ENCODE measurements at regions of chr3 and their contacts with region 1.

Region 1: DNA sequence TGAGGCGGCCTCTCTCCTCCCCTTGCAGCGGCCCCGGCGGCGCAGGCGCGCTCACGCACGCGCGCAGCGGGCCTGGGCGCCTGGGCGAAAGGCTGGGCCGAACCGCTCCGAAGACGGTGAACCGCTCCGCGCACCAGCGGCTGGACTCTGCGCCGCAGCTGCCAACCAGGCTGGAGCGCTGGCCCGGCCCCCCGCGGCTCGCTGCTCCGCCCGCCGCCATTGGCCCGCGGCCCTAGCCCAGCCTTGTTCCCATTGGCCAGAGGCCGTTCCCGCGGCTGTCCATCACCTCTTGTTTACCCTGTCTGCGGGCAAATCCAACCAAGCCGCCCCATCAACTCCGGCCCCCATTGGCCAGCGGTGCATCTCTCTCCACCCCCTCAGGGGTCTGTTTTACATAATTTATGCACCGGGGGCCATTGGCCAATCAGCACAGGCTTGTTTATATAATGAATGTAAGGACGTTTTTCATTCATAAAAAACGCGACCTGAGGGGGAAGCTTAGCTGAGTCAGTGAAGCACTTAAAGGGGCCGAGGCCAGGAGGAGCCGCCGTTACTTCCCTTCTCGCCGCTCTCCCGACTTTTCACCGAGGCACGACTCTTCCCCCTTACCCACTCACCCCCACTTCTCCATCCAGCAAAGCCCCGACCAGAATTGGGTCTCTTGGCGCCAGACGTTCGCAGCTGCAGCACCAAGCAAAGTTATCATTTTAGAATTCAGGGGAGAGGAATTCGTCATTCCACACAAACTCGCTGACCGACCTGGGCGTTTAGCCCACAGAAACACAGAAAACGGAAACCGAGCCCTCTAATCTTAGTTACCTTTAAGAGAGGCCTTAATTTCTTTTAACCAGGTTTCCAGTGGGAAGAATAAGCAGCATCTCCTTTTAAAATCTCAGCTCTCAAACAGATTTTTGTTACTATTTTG is at the start of gene ETV5:
- DNase-seq: peak; percentile 96
- ATAC-seq: peak; percentile 96
- H3K4me3 Mint-ChIP-seq: peak within 1 kb of the TSS; percentile 73
- H3K27ac Mint-ChIP-seq: peak within 1 kb of the TSS; percentile 42
- H3K4me1 Mint-ChIP-seq: peaks cover 34% of the 10 kb centered on the region
- H3K27me3 Mint-ChIP-seq: peaks cover 69% of the 10 kb centered on the region
- total RNA-seq, gene ETV5: 0.83 to 1.4 TPM

Region 2: GRCh38 chr3:185585859-185586685 is 523.1 kb before region 1 on chr3 and contains the start of gene SENP2:
- CTCF ChIA-PET with region 1: no interaction called
- POLR2A ChIA-PET with region 1: no interaction called
- intact Hi-C with region 1: loop called in 1 of 2 experiments (anchors 2 kb)
- DNase-seq: peak; percentile 100
- ATAC-seq: peak; percentile 98
- H3K4me3 Mint-ChIP-seq: peak within 1 kb of the TSS; percentile 87
- H3K27ac Mint-ChIP-seq: peak within 1 kb of the TSS; percentile 93
- H3K4me1 Mint-ChIP-seq: peaks cover 26% of the 10 kb centered on the region
- H3K27me3 Mint-ChIP-seq: no peaks in the 10 kb centered on the region
- total RNA-seq, gene SENP2: 23.2 to 24.6 TPM

Region 3: GRCh38 chr3:185878920-185879319 is 230.3 kb before region 1 on chr3:
- CTCF ChIA-PET with region 1: no interaction called
- POLR2A ChIA-PET with region 1: no interaction called
- intact Hi-C with region 1: no loop called
- DNase-seq: no peak
- ATAC-seq: no peak
- H3K4me3 Mint-ChIP-seq: no peak overlapping the region
- H3K27ac Mint-ChIP-seq: no peak overlapping the region
- H3K4me1 Mint-ChIP-seq: no peaks in the 10 kb centered on the region
- H3K27me3 Mint-ChIP-seq: peaks cover 4% of the 10 kb centered on the region

Region 4: DNA sequence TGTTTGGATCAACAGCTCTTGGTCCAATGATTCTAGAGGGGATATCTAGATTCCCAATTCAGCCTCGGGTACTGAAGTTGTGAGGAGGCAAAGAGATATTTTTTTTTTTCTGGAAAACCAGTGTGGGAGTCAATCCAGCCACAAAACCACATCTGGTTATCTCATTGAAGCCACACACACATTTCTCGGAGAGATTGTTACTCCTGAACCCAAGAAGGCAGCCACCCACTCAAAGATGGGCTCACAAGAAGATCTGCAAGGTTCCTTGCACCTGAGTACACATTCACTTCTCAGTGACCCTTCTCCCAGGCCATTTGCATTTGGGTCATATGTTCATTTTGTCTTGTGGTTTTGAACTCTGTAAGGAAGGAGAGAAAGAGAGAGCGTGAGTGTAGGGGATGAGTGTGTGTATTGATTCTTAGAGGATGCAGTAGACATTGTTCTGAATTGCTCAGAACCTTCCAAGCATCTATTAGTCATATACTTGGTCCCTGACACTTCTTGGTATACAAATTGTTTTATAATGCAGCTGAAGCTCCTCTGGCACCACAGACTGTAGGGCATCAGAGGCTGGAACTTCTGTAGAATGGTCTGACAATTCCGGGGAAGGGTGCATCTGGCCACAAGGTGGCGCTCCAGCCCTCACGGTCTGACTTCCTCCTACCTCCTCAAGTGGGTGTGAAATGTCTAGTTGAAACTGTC is 132.1 kb before region 1 on chr3:
- CTCF ChIA-PET with region 1: no interaction called
- POLR2A ChIA-PET with region 1: no interaction called
- intact Hi-C with region 1: loop called (anchors 5 kb)
- DNase-seq: peak; percentile 93
- ATAC-seq: peak; percentile 91
- H3K4me3 Mint-ChIP-seq: no peak overlapping the region
- H3K27ac Mint-ChIP-seq: peak overlapping the region; percentile 11
- H3K4me1 Mint-ChIP-seq: peaks cover 18% of the 10 kb centered on the region
- H3K27me3 Mint-ChIP-seq: no peaks in the 10 kb centered on the region

Region 5: GRCh38 chr3:186152889-186153292 is 43.7 kb after region 1 on chr3:
- CTCF ChIA-PET with region 1: no interaction called
- POLR2A ChIA-PET with region 1: no interaction called
- intact Hi-C with region 1: loop called (anchors 1 to 2 kb)
- DNase-seq: no peak
- ATAC-seq: peak; percentile 18
- H3K4me3 Mint-ChIP-seq: no peak overlapping the region
- H3K27ac Mint-ChIP-seq: no peak overlapping the region
- H3K4me1 Mint-ChIP-seq: peaks cover 13% of the 10 kb centered on the region
- H3K27me3 Mint-ChIP-seq: peaks cover 36% of the 10 kb centered on the region

Region 6: DNA sequence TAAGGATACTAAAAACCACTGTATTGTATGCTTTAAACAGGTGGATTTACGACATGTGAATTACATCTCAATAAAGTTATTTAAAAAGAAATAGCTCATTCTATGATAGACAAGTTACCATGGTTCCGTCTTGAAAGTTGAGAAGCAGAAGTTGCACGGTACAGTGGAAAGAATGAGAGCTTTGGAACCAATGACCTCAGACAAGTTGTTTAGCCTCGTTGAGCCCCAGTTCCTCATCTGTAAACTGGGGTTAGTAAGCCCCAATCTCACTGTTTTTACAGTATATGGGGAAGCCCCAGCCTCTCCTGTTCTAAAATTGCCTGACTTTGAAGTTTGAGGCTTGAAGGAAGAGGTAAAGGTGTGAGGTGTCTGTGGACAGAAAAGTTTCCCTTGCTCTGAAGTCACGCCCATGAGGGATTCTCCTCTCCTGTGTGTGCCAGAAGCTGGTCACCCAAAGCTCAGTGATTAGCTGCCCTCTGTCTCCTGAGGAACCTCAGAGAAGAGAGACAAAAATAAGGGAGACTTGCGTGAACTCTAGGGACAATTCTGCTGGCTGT is 425.0 kb after region 1 on chr3:
- CTCF ChIA-PET with region 1: interaction called, 4 read pairs
- POLR2A ChIA-PET with region 1: no interaction called
- intact Hi-C with region 1: loop called (anchors 2 to 10 kb)
- DNase-seq: peak; percentile 71
- ATAC-seq: peak; percentile 79
- H3K4me3 Mint-ChIP-seq: peak overlapping the region; percentile 55
- H3K27ac Mint-ChIP-seq: peak overlapping the region; percentile 99
- H3K4me1 Mint-ChIP-seq: peaks cover 94% of the 10 kb centered on the region
- H3K27me3 Mint-ChIP-seq: no peaks in the 10 kb centered on the region

Region 7: GRCh38 chr3:186806089-186807055 is 697.2 kb after region 1 on chr3 and contains the start of gene RFC4:
- CTCF ChIA-PET with region 1: no interaction called
- POLR2A ChIA-PET with region 1: no interaction called
- intact Hi-C with region 1: loop called in 1 of 2 experiments (anchors 5 kb)
- DNase-seq: peak; percentile 93
- ATAC-seq: peak; percentile 89
- H3K4me3 Mint-ChIP-seq: peak within 1 kb of the TSS; percentile 90
- H3K27ac Mint-ChIP-seq: peak within 1 kb of the TSS; percentile 92
- H3K4me1 Mint-ChIP-seq: peaks cover 26% of the 10 kb centered on the region
- H3K27me3 Mint-ChIP-seq: no peaks in the 10 kb centered on the region
- total RNA-seq, gene RFC4: 128 to 130 TPM